K562 (cell line): ENCODE measurements at regions of chr7 and their contacts with region 1.

Region 1: GRCh38 chr7:8261711-8262695 is at the start of gene ICA1:
- DNase-seq: peak; percentile 77 to 83 (median 78)
- ATAC-seq: peak; percentile 94
- H3K4me3 ChIP-seq: peak within 1 kb of the TSS; percentile 79
- H3K27ac ChIP-seq: peak within 1 kb of the TSS; percentile 75
- H3K4me1 ChIP-seq: peaks cover 10 to 11% of the 10 kb centered on the region in 2 experiments; a peak in 4 of 5 replicates
- H3K27me3 ChIP-seq: no peaks in the 10 kb centered on the region
- CTCF ChIP-seq: peak in 2 of 3 experiments; percentile 18 to 33; a peak in 2 of 6 replicates
- EP300 ChIP-seq: no peak
- POLR2A ChIP-seq: peak; percentile 64
- RAD21 ChIP-seq: no peak; a peak in 1 of 4 replicates
- polyA plus RNA-seq, gene ICA1: 7.1 to 10.7 TPM

Region 2: GRCh38 chr7:7911371-7912155 is 350.4 kb before region 1 on chr7:
- CTCF ChIA-PET with region 1: no interaction called
- POLR2A ChIA-PET with region 1: no interaction called
- in situ Hi-C with region 1: no loop called
- intact Hi-C with region 1: no loop called
- DNase-seq: no peak
- ATAC-seq: no peak
- H3K4me3 ChIP-seq: no peak overlapping the region
- H3K27ac ChIP-seq: no peak overlapping the region
- H3K4me1 ChIP-seq: no peaks in the 10 kb centered on the region
- H3K27me3 ChIP-seq: no peaks in the 10 kb centered on the region; a peak in 2 of 5 replicates
- CTCF ChIP-seq: no peak
- EP300 ChIP-seq: no peak
- POLR2A ChIP-seq: no peak
- RAD21 ChIP-seq: no peak

Region 3: GRCh38 chr7:8221567-8221966 is 40.4 kb before region 1 on chr7:
- CTCF ChIA-PET with region 1: no interaction called
- POLR2A ChIA-PET with region 1: no interaction called
- in situ Hi-C with region 1: no loop called
- intact Hi-C with region 1: no loop called
- DNase-seq: no peak
- ATAC-seq: no peak
- H3K4me3 ChIP-seq: no peak overlapping the region
- H3K27ac ChIP-seq: no peak overlapping the region
- H3K4me1 ChIP-seq: no peaks in the 10 kb centered on the region; a peak in 1 of 5 replicates
- H3K27me3 ChIP-seq: no peaks in the 10 kb centered on the region
- CTCF ChIP-seq: no peak
- EP300 ChIP-seq: no peak
- POLR2A ChIP-seq: no peak
- RAD21 ChIP-seq: no peak

Region 4: GRCh38 chr7:8232999-8233847 is 28.8 kb before region 1 on chr7:
- CTCF ChIA-PET with region 1: no interaction called
- POLR2A ChIA-PET with region 1: interaction called, 3 read pairs
- in situ Hi-C with region 1: no loop called
- intact Hi-C with region 1: loop called (anchors 1 kb)
- DNase-seq: peak; percentile 77 to 93 (median 85)
- ATAC-seq: peak; percentile 98
- H3K4me3 ChIP-seq: peak overlapping the region; percentile 9; the same call in 1 of the 2 replicates
- H3K27ac ChIP-seq: peak overlapping the region; percentile 83
- H3K4me1 ChIP-seq: peaks cover 14 to 28% of the 10 kb centered on the region in 2 experiments; a peak in 4 of 5 replicates
- H3K27me3 ChIP-seq: no peaks in the 10 kb centered on the region
- CTCF ChIP-seq: no peak
- EP300 ChIP-seq: peak; percentile 88
- POLR2A ChIP-seq: peak; percentile 71
- RAD21 ChIP-seq: no peak

Region 5: DNA sequence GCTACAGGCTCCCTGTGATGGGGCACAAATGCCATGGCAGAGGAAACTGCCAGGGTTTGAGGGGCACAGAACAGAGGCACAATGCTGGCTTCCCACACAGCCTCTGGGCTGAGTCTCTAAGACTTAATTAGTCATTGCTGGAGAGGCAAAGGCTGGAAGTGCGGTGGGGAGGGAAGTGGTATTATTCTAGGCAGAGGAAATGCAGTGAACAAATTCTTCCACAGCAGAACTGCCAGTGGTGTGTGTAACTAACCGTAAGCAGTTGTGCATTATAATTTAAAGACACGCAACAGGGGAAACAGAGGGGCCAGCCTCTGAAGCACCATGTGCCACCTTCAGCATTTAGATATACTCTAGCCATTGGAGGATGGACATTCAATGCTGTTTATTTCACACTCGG is 12.9 kb before region 1 on chr7:
- CTCF ChIA-PET with region 1: no interaction called
- POLR2A ChIA-PET with region 1: interaction called, 10 read pairs
- in situ Hi-C with region 1: no loop called
- intact Hi-C with region 1: no loop called
- DNase-seq: no peak
- ATAC-seq: no peak
- H3K4me3 ChIP-seq: no peak overlapping the region
- H3K27ac ChIP-seq: no peak overlapping the region
- H3K4me1 ChIP-seq: peaks cover 0 to 4% of the 10 kb centered on the region in 2 experiments; a peak in 1 of 5 replicates
- H3K27me3 ChIP-seq: no peaks in the 10 kb centered on the region
- CTCF ChIP-seq: no peak
- EP300 ChIP-seq: no peak
- POLR2A ChIP-seq: no peak
- RAD21 ChIP-seq: no peak